Activated CD4-positive, alpha-beta T cell treated with anti-CD3 and anti-CD28 coated beads for 36 hours (primary cell): ENCODE measurements at regions of chr9 and their contacts with region 1.

Region 1: GRCh38 chr9:83313781-83314180 is 224.4 kb downstream of the FRMD3 start:
- DNase-seq: no peak
- ATAC-seq: no peak
- H3K4me3 Mint-ChIP-seq: no peak overlapping the region
- H3K27ac Mint-ChIP-seq: no peak overlapping the region
- H3K4me1 Mint-ChIP-seq: no peaks in the 10 kb centered on the region
- H3K27me3 Mint-ChIP-seq: no peaks in the 10 kb centered on the region

Region 2: DNA sequence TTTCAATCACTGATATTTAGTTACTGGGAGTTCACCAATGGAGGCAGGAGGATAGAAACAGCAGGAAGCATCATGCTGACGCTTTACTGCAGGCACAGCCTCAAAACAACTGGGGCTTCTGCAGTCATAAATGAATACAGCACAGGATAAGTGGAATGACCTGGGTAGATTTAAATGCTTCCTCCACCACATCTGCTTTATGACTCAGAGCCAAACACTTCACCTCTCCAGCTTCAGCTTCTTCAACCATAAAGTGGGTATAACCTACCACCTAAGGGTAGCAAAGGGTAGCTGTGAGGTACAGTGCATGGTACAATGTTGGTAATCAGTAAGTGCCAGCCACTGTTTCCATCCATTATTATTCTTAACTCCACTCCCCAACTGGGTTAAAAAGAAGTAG is 279.2 kb before region 1 on chr9:
- CTCF ChIA-PET with region 1: no interaction called
- POLR2A ChIA-PET with region 1: no interaction called
- intact Hi-C with region 1: no loop called
- DNase-seq: no peak
- ATAC-seq: no peak
- H3K4me3 Mint-ChIP-seq: no peak overlapping the region
- H3K27ac Mint-ChIP-seq: no peak overlapping the region
- H3K4me1 Mint-ChIP-seq: no peaks in the 10 kb centered on the region
- H3K27me3 Mint-ChIP-seq: peaks cover 3% of the 10 kb centered on the region

Region 3: DNA sequence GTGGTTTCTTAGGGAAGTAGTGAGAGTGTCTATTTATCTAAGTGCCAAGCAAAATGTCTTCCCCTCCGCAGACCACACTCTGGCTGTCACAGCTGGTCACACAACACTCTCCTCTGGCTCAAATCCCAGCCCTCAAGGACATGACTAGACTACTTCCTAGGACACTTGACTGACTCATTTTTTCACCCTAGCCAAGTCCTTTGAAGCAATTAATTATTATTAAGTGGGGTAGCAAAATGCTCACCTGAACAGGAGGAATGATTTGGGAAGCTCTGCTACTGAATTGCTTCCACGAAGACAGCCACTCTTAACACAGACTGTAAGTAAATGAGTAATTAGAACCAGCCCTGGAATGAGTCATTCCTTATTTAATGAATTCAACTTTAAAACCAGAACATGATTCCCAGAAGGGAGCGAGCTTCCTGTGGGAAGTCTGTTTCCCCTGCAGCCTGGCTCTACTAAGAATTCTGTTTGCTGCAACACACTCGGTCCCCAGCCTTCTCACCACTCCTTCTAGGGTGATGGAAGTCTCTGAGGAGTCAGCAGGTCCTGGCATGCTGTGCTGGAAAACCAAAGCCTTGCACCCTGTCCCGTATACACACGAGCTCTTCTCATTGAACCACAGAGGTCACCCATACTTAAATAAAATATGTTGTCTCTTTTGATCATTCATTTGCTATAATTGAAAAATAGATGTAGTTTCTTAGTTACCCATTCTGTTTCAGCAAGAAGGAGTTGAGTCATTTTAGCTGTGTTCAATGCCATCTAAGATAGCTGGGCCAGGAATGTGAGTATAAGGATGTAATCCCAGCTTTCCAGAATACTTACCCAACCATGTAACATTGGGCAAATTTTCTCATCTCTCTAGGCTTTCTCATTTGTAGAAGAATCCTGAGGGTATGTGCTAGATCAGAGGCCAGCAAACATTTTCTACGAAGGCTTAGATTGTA is 32.2 kb before region 1 on chr9:
- CTCF ChIA-PET with region 1: no interaction called
- POLR2A ChIA-PET with region 1: no interaction called
- intact Hi-C with region 1: no loop called
- DNase-seq: no peak
- ATAC-seq: no peak
- H3K4me3 Mint-ChIP-seq: no peak overlapping the region
- H3K27ac Mint-ChIP-seq: no peak overlapping the region
- H3K4me1 Mint-ChIP-seq: no peaks in the 10 kb centered on the region
- H3K27me3 Mint-ChIP-seq: no peaks in the 10 kb centered on the region

Region 4: GRCh38 chr9:83385317-83385716 is 71.5 kb after region 1 on chr9:
- CTCF ChIA-PET with region 1: no interaction called
- POLR2A ChIA-PET with region 1: no interaction called
- intact Hi-C with region 1: loop called in 1 of 2 experiments (anchors 2 kb)
- DNase-seq: no peak
- ATAC-seq: no peak
- H3K4me3 Mint-ChIP-seq: no peak overlapping the region
- H3K27ac Mint-ChIP-seq: no peak overlapping the region
- H3K4me1 Mint-ChIP-seq: no peaks in the 10 kb centered on the region
- H3K27me3 Mint-ChIP-seq: no peaks in the 10 kb centered on the region